Sigmoid colon (tissue), 7 donors: ENCODE measurements at regions of chr6 and their contacts with region 1.

Region 1: DNA sequence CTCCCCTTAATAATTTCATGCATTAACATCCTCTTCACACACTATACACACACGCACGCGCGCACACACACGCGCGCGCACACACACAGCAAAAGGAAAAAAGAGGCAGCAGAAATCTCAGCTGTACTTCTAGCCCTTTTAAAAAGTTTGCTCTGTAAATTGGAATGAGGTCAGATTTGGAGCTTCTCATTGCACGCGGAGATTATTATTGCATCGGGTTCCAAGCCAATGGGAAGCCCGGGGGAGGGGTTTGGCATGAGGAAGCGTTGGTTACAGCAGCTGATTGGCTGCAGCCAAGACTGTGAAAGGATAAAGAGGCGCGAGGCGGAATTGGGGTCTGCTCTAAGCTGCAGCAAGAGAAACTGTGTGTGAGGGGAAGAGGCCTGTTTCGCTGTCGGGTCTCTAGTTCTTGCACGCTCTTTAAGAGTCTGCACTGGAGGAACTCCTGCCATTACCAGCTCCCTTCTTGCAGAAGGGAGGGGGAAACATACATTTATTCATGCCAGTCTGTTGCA is at the start of gene SOX4:
- DNase-seq: peak; percentile 96
- H3K4me3 ChIP-seq: peak within 1 kb of the TSS; percentile 60 to 94 (median 74)
- H3K27ac ChIP-seq: peak within 1 kb of the TSS; percentile 87 to 98 (median 94)
- H3K4me1 ChIP-seq: peaks cover 0 to 19% (median 14%) of the 10 kb centered on the region in 4 donors
- H3K27me3 ChIP-seq: no peaks in the 10 kb centered on the region
- CTCF ChIP-seq: no peak
- EP300 ChIP-seq: no peak
- POLR2A ChIP-seq: peak; percentile 31 to 71
- total RNA-seq, gene SOX4: 3.9 to 8.8 (median 6.5) TPM

Region 2: GRCh38 chr6:20564777-20565176 is 1028.7 kb before region 1 on chr6:
- intact Hi-C with region 1: loop called (anchors 1 kb)
- DNase-seq: no peak
- H3K4me3 ChIP-seq: no peak overlapping the region
- H3K27ac ChIP-seq: no peak overlapping the region
- H3K4me1 ChIP-seq: peaks cover 0 to 14% (median 12%) of the 10 kb centered on the region in 4 donors
- H3K27me3 ChIP-seq: no peaks in the 10 kb centered on the region
- CTCF ChIP-seq: no peak
- EP300 ChIP-seq: no peak
- POLR2A ChIP-seq: no peak

Region 3: DNA sequence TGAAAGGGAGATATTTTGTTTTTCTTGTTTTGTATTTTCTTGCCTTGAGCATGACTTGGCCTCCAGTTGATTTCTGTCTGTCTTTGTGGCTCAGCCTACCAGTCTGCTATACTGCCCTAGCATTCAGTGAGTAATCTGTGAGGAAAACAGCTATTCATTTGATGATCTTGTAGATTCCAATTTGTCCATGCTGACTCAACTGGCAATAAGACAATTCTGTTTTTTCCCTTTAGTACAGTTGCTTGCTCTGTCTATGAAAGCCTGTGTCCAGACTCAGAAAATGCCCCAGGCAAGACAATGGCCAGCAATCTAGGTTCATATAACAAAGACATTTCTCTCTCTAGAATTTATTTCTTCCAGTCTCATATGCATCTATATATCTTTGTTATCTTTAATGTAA is 10.8 kb before region 1 on chr6:
- intact Hi-C with region 1: no loop called
- DNase-seq: no peak
- H3K4me3 ChIP-seq: no peak overlapping the region
- H3K27ac ChIP-seq: no peak overlapping the region
- H3K4me1 ChIP-seq: peaks cover 0 to 11% (median 6%) of the 10 kb centered on the region in 4 donors
- H3K27me3 ChIP-seq: no peaks in the 10 kb centered on the region
- CTCF ChIP-seq: no peak
- EP300 ChIP-seq: no peak
- POLR2A ChIP-seq: no peak

Region 4: DNA sequence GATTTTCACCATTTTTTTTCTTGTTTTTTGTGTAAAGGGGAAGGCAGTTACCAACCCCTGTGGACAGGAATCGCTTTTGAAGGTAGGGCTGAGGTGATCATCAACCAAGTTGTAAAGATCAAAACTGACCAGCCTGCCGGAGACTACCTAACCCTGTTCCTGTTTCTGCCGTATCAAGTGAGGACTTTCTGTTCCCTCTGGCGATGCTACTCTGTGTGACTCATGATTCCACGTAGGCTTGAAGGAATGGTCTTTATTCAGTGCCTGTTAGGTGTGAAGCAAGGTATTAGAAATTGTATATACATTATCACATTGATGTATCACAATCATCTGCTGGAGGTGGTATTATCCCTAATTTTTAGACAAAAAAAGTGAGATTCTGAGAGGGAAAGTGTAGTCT is 161.4 kb after region 1 on chr6:
- intact Hi-C with region 1: loop called (anchors 5 kb)
- DNase-seq: no peak
- H3K4me3 ChIP-seq: no peak overlapping the region
- H3K27ac ChIP-seq: peak overlapping the region in 3 of 4 donors; percentile 60 to 75 (median 66)
- H3K4me1 ChIP-seq: peaks cover 0 to 58% (median 31%) of the 10 kb centered on the region in 4 donors
- H3K27me3 ChIP-seq: no peaks in the 10 kb centered on the region
- CTCF ChIP-seq: no peak
- EP300 ChIP-seq: peak in 3 of 4 donors; percentile 17 to 83 (median 21)
- POLR2A ChIP-seq: no peak

Region 5: DNA sequence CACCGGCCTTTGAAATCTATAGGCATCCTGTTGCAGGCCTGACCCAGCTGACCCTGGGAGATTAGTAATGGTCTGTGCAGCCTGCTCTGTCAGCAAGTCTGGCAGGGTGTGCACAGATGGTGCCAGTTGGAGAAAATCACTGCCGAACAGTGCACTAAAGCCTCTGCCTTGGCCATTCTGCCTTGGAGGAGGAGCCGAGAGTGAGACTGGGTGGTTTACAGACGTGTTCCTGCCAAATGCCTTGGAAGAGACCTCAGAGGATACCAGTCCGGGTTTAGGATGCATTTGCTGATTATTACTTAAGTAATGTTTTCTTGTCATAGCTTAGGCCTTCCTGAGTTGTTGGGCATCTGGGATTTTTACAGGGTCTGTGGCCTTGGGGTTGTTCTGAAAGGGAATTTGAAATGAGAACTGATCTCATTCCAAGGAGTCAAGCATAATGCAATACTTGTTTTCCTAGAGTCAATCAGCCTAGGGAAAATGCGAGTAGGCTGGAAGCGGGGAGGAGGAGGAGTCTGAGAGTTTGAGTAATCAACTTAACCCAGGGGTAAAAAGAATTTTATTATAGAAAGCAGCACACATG is 292.2 kb after region 1 on chr6:
- intact Hi-C with region 1: loop called (anchors 10 kb)
- DNase-seq: peak; percentile 74
- H3K4me3 ChIP-seq: no peak overlapping the region
- H3K27ac ChIP-seq: peak overlapping the region; percentile 62 to 79 (median 74)
- H3K4me1 ChIP-seq: peaks cover 0 to 39% (median 34%) of the 10 kb centered on the region in 4 donors
- H3K27me3 ChIP-seq: no peaks in the 10 kb centered on the region
- CTCF ChIP-seq: no peak
- EP300 ChIP-seq: no peak
- POLR2A ChIP-seq: no peak

Region 6: DNA sequence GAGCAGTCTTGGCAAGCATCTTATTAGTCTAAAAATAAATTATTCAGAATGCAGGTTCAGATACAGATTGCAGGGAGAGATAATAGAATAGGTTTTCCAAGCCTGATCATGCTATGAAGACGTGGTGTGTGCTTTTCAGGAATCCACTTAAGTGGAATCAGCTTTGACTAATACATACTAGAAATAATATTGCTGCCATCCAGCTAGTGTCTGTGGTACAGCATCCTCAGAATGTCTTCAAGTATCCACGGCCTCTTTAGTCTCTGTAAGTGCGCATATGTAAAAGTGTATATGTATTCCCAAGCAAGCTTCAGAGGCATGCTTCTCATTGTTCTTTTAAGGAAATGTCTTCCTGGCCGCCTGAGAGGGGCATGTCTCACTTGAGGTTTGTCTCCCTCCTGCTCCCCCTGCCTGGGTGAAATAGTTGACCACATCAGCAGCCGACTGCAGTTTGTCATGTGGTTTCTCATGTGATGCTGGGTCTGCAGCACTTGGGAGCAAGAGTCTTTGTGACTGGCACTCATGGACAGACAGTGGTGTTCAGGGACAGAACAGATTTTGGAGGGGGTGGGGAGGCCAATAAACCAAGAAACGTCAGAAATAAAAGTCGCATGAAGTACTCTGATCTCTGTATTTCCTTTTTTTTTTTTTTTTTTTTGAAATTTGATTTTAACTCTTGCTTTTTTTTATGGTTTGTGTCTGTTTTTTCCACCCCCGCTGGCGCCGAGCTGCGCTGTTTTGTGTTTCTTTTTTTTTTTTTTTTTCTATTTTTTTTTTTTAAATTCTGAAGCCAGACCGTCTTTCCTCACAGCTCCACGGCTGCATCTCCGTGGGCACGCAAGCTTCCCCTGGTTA is 552.6 kb after region 1 on chr6:
- intact Hi-C with region 1: loop called (anchors 5 kb)
- DNase-seq: no peak
- H3K4me3 ChIP-seq: peak overlapping the region in 3 of 4 donors; percentile 33 to 47 (median 43)
- H3K27ac ChIP-seq: peak overlapping the region in 1 of 4 donors; percentile 57
- H3K4me1 ChIP-seq: peaks cover 0 to 62% (median 49%) of the 10 kb centered on the region in 4 donors
- H3K27me3 ChIP-seq: no peaks in the 10 kb centered on the region
- CTCF ChIP-seq: peak in 3 of 4 experiments; percentile 24 to 32 (median 31)
- EP300 ChIP-seq: peak in 1 of 4 donors; percentile 30
- POLR2A ChIP-seq: no peak

Region 7: GRCh38 chr6:22363714-22364239 is 770.3 kb after region 1 on chr6:
- intact Hi-C with region 1: no loop called
- DNase-seq: no peak
- H3K4me3 ChIP-seq: no peak overlapping the region
- H3K27ac ChIP-seq: no peak overlapping the region
- H3K4me1 ChIP-seq: peaks cover 0 to 6% (median 1%) of the 10 kb centered on the region in 4 donors
- H3K27me3 ChIP-seq: no peaks in the 10 kb centered on the region
- CTCF ChIP-seq: no peak
- EP300 ChIP-seq: no peak
- POLR2A ChIP-seq: no peak

Region 8: GRCh38 chr6:22838345-22838744 is 1244.9 kb after region 1 on chr6:
- intact Hi-C with region 1: no loop called
- DNase-seq: no peak
- H3K4me3 ChIP-seq: no peak overlapping the region
- H3K27ac ChIP-seq: no peak overlapping the region
- H3K4me1 ChIP-seq: no peaks in the 10 kb centered on the region
- H3K27me3 ChIP-seq: no peaks in the 10 kb centered on the region
- CTCF ChIP-seq: no peak
- EP300 ChIP-seq: no peak
- POLR2A ChIP-seq: no peak